ENCODE measurements at regions of chr15 and their contacts with region 1.

Region 1: DNA sequence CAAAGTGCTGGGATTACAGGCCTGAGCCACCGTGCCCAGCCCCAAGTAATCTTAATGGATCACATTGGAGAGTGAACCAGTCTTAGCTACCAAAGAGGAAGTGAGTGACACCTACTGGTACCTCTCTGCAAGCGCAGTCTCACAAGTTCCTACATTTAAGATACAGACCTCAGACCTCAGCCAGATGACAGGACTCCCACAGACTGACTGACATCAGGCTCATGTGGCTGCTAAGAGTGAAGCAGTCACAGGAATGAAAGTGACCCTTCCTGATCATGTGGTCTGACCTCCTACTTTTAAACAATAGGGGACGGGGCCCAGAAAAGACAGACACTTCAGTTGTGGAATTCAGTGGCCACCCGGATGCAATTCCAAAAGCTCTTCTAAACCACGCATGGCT is 36.3 kb upstream of the GNB5 start:
- DNase-seq: peak in 8 of 9 donors; percentile 51 to 74 (median 65)
- ATAC-seq: peak; percentile 98
- H3K4me3 ChIP-seq: no peak overlapping the region
- H3K4me3 Mint-ChIP-seq: no peak overlapping the region
- H3K27ac ChIP-seq: no peak overlapping the region
- H3K27ac Mint-ChIP-seq: peak overlapping the region in 2 of 9 donors; percentile 19 to 56
- H3K4me1 ChIP-seq: peaks cover 0 to under 1% of the 10 kb centered on the region in 2 donors
- H3K4me1 Mint-ChIP-seq: peaks cover 10 to 26% (median 19%) of the 10 kb centered on the region in 7 donors
- H3K27me3 ChIP-seq: no peaks in the 10 kb centered on the region
- H3K27me3 Mint-ChIP-seq: no peaks in the 10 kb centered on the region

Region 2: DNA sequence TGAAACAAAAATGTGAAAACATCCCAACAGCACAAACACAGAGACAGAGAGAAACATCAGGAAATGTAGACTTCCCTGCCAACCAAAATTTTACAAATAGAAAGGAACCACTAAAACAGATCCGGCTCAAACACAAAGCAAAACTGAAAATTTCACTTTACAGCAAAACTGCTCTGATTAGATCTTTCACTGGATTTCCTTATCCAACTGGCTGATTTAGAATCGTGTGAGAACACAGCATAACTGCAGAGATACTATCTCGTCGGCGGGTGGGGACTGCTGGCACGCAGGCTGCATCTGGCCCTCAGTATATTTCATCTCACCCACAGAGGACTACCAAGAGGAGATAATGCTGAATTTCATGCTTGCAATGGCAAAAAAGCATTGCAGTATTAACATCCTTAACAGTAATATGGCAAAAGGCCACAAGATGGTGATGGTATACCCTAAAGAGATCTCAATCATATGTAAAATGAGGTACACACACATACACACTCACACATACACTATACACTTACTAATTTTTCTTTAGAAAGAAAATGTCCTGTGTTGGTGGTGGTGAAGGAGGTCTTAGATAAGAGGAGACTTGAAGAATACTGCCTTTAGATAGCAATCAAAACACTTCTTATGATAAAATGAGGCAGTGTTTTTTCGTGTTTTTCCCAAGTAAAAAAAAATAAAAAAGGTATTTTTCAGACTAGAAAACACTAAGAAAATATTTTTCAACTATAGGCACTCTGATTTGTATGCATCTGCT is 245.3 kb before region 1 on chr15:
- CTCF ChIA-PET with region 1: no interaction called
- POLR2A ChIA-PET with region 1: no interaction called
- intact Hi-C with region 1: loop called (anchors 1 to 2 kb)
- DNase-seq: peak in 8 of 9 donors; percentile 45 to 78 (median 60)
- ATAC-seq: peak; percentile 97
- H3K4me3 ChIP-seq: peak overlapping the region; percentile 2
- H3K4me3 Mint-ChIP-seq: peak overlapping the region; percentile 51 to 89 (median 79)
- H3K27ac ChIP-seq: peak overlapping the region; percentile 38
- H3K27ac Mint-ChIP-seq: peak overlapping the region; percentile 68 to 93 (median 82)
- H3K4me1 ChIP-seq: peaks cover 0 to 10% of the 10 kb centered on the region in 2 donors
- H3K4me1 Mint-ChIP-seq: peaks cover 10 to 15% (median 12%) of the 10 kb centered on the region in 7 donors
- H3K27me3 ChIP-seq: no peaks in the 10 kb centered on the region
- H3K27me3 Mint-ChIP-seq: peaks cover 0 to 4% (median 0%) of the 10 kb centered on the region in 5 donors

Region 3: DNA sequence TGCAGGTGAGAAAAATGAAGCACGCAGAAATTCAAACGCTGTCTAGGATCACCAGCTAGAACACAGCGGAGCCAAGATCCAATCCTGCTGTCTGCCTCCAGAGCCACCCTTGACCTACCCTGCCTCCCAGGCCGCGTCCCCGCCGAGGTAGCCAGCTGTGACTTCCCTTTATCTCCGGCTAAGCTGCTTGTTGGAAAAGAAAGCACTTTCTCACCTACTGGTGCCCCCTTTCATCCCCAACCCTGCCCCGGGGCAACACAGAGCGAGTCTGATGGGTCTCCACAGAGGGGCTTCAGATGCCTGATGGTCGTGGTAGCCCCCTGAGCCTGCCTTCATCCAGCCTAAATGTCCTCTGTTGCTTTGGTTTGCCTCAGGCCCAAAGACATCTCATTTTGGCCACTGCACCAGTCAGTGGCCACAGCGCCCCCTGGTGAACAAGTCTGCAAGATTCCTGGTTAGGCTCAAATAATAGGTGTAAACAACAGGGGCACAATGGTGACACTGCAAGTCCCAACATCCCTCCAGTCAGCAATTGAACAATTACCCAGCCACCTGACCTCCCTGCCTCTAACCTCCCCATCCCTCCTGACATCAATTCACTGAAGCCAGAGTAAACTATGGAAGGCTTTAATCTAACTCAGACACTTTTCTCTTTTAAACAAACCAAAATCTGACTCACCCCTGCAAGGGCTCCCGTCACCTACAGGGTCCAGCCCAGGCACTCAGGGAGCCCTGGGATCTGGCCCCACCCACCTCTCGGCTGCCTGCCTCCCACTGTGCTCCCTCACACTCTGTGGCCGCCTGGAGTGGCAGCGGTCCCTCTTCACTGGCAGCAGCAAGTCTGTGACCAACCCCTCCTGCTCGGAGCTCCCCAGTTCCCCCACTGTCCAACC is 87.6 kb before region 1 on chr15:
- CTCF ChIA-PET with region 1: no interaction called
- POLR2A ChIA-PET with region 1: no interaction called
- intact Hi-C with region 1: loop called (anchors 5 kb)
- DNase-seq: peak; percentile 17 to 70 (median 49)
- ATAC-seq: peak; percentile 71
- H3K4me3 ChIP-seq: no peak overlapping the region
- H3K4me3 Mint-ChIP-seq: no peak overlapping the region
- H3K27ac ChIP-seq: no peak overlapping the region
- H3K27ac Mint-ChIP-seq: peak overlapping the region in 3 of 9 donors; percentile 20 to 65 (median 63)
- H3K4me1 ChIP-seq: peaks cover 13 to 14% of the 10 kb centered on the region in 2 donors
- H3K4me1 Mint-ChIP-seq: peaks cover 8 to 29% (median 22%) of the 10 kb centered on the region in 7 donors
- H3K27me3 ChIP-seq: no peaks in the 10 kb centered on the region
- H3K27me3 Mint-ChIP-seq: no peaks in the 10 kb centered on the region

Region 4: GRCh38 chr15:52171386-52171785 is 56.1 kb before region 1 on chr15:
- CTCF ChIA-PET with region 1: interaction called, 11 read pairs
- POLR2A ChIA-PET with region 1: interaction called, 4 read pairs
- intact Hi-C with region 1: no loop called
- DNase-seq: peak in 5 of 9 donors; percentile 28 to 41 (median 31)
- ATAC-seq: peak; percentile 73
- H3K4me3 ChIP-seq: no peak overlapping the region
- H3K4me3 Mint-ChIP-seq: peak overlapping the region in 7 of 10 donors; percentile 18 to 71 (median 46)
- H3K27ac ChIP-seq: no peak overlapping the region
- H3K27ac Mint-ChIP-seq: peak overlapping the region in 8 of 9 donors; percentile 2 to 74 (median 43)
- H3K4me1 ChIP-seq: peaks cover 8 to 15% of the 10 kb centered on the region in 2 donors
- H3K4me1 Mint-ChIP-seq: peaks cover 27 to 71% (median 54%) of the 10 kb centered on the region in 7 donors
- H3K27me3 ChIP-seq: no peaks in the 10 kb centered on the region
- H3K27me3 Mint-ChIP-seq: peaks cover 0 to 2% (median 0%) of the 10 kb centered on the region in 5 donors

Region 5: DNA sequence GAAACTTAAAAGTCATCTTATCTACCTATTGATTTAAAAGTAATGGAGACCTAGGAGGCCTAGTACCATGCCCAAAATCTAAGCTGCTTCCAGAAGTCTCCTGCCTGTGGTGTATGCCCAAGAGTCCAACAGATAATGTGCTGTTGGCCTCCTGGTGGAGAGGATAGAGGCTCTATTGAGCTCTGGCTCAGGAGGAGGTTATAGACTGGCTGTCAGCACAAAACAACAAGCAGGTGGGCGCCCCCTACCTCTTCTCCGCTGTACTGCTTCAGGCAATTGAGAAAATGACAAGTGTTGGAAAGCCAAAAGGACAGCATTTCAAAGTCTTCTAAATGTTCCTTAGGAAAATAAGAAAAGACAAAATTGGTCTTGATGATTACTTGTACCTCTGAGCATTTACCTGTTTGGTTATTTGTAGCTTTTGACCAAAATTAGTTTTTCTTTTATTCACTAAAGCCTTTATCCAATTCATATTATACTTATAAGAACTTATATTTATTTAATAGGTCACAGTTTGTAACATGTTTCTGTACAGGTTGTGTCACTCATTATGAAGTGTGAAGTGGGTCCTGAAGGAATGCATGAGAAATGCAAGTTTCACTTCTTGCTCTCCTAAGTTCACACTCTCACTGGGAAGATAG is 19.0 kb before region 1 on chr15:
- CTCF ChIA-PET with region 1: interaction called, 5 read pairs
- POLR2A ChIA-PET with region 1: no interaction called
- intact Hi-C with region 1: loop called (anchors 1 to 2 kb)
- DNase-seq: peak; percentile 45 to 77 (median 70)
- ATAC-seq: peak; percentile 95
- H3K4me3 ChIP-seq: no peak overlapping the region
- H3K4me3 Mint-ChIP-seq: no peak overlapping the region
- H3K27ac ChIP-seq: no peak overlapping the region
- H3K27ac Mint-ChIP-seq: peak overlapping the region in 4 of 9 donors; percentile 4 to 77 (median 69)
- H3K4me1 ChIP-seq: no peaks in the 10 kb centered on the region
- H3K4me1 Mint-ChIP-seq: peaks cover 0 to 6% (median 0%) of the 10 kb centered on the region in 7 donors
- H3K27me3 ChIP-seq: no peaks in the 10 kb centered on the region
- H3K27me3 Mint-ChIP-seq: no peaks in the 10 kb centered on the region

Region 6: DNA sequence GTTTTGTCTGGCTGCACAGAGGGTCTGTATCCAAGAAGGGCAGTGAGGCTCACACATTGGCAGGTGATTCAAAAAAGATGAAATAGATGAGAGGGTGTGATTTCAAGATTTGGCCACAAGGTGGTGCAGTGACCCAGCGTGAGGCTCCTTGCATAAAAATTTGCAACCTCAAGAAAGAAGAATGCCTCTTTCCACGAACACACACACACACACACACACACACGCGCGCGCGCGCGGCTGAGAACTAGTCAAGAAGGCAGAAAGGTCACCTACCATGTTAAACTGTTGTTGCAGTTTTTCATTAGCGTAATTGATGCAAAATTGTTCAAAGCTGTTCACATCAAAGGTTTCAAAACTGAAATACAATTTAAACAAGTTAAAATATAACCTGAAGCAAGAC is 28.9 kb after region 1 on chr15:
- CTCF ChIA-PET with region 1: interaction called, 25 read pairs
- POLR2A ChIA-PET with region 1: no interaction called
- intact Hi-C with region 1: no loop called
- DNase-seq: peak; percentile 27 to 80 (median 75)
- ATAC-seq: peak; percentile 98
- H3K4me3 ChIP-seq: peak overlapping the region; percentile 14
- H3K4me3 Mint-ChIP-seq: peak overlapping the region; percentile 49 to 85 (median 72)
- H3K27ac ChIP-seq: no peak overlapping the region
- H3K27ac Mint-ChIP-seq: peak overlapping the region; percentile 4 to 96 (median 65)
- H3K4me1 ChIP-seq: peaks cover 0 to 12% of the 10 kb centered on the region in 2 donors
- H3K4me1 Mint-ChIP-seq: peaks cover 5 to 55% (median 17%) of the 10 kb centered on the region in 7 donors
- H3K27me3 ChIP-seq: no peaks in the 10 kb centered on the region
- H3K27me3 Mint-ChIP-seq: no peaks in the 10 kb centered on the region

Measured in naive thymus-derived CD4-positive, alpha-beta T cell (primary cell).